HAP-1 (cell line): ENCODE measurements at regions of chr2 and their contacts with region 1.

Region 1: GRCh38 chr2:46650556-46651001 is 171.2 kb downstream of the TMEM247 start:
- DNase-seq: peak; percentile 79 to 80
- H3K4me3 ChIP-seq: no peak overlapping the region
- H3K4me1 ChIP-seq: no peaks in the 10 kb centered on the region
- H3K27me3 ChIP-seq: no peaks in the 10 kb centered on the region

Region 2: GRCh38 chr2:46010925-46011490 is 639.6 kb before region 1 on chr2:
- in situ Hi-C with region 1: loop called (anchors 25 kb)
- DNase-seq: peak in 1 of 2 experiments; percentile 35
- H3K4me3 ChIP-seq: no peak overlapping the region
- H3K4me1 ChIP-seq: no peaks in the 10 kb centered on the region
- H3K27me3 ChIP-seq: no peaks in the 10 kb centered on the region